Common myeloid progenitor, CD34-positive (primary cell): ENCODE measurements at regions of chr6 and their contacts with region 1.

Region 1: GRCh38 chr6:135922746-135923145 is 71.2 kb downstream of the PDE7B start:
- DNase-seq: no peak
- H3K4me3 ChIP-seq: no peak overlapping the region
- H3K27ac ChIP-seq: no peak overlapping the region
- H3K4me1 ChIP-seq: no peaks in the 10 kb centered on the region
- H3K27me3 ChIP-seq: no peaks in the 10 kb centered on the region

Region 2: DNA sequence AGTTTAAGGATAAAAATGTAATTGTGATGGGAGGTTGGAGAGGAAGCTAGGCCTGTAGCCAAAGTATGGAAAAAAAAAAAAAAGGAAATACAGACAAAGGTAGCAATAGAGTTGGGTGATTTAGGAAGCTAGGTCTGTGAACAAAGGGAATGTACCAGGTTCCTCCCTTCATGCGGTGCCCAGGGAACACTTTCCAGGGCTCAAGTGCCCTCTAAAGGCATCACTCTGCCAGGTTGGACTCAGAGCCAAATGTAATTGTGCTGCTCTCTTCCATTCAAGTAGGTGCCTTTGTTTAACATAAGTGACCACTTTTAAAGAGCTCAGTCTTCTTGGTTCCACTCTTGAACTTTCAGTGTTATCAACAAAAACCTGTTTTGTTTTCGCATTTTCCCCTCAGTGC is 265.5 kb before region 1 on chr6:
- CTCF ChIA-PET with region 1: no interaction called
- POLR2A ChIA-PET with region 1: no interaction called
- DNase-seq: no peak
- H3K4me3 ChIP-seq: no peak overlapping the region
- H3K27ac ChIP-seq: no peak overlapping the region
- H3K4me1 ChIP-seq: peaks cover 0 to 8% (median 8%) of the 10 kb centered on the region in 4 experiments
- H3K27me3 ChIP-seq: no peaks in the 10 kb centered on the region

Region 3: GRCh38 chr6:135811644-135812526 is 110.9 kb before region 1 on chr6:
- CTCF ChIA-PET with region 1: no interaction called
- POLR2A ChIA-PET with region 1: no interaction called
- DNase-seq: peak; percentile 46 to 87 (median 79)
- H3K4me3 ChIP-seq: no peak overlapping the region
- H3K27ac ChIP-seq: peak overlapping the region in 1 of 2 experiments; percentile 27
- H3K4me1 ChIP-seq: peaks cover 0 to 19% (median 12%) of the 10 kb centered on the region in 4 experiments
- H3K27me3 ChIP-seq: no peaks in the 10 kb centered on the region

Region 4: DNA sequence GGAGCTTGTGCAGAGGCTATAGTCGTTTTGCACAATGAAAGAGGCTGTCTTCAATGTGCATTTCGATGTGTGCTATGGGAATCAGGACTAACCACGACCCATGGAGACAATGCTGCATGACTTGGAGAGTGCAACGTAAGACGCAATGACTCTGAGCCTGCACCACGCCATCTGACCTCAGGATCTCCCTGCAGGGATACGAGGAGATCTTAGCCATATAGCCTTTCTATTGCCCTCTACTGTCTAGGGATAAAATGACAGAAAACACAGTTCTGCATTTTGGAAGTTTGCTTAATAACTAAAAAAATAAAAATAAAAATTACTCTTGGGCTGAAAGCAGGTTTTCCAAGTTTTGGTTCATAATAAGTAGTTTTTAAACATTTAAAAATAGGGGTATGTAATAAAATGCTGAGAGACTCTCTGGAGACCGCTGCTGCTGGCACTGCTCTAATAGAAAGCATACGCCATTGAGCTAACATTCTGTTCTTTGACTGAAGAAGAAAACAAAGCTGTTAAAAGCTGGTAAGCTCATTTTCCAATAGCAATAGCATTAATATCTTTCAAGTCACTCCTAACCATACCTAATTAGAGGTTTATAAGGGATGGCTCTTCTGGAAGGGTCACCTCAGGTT is 15.9 kb after region 1 on chr6:
- CTCF ChIA-PET with region 1: interaction called, 11 read pairs
- POLR2A ChIA-PET with region 1: no interaction called
- DNase-seq: peak; percentile 15 to 52 (median 46)
- H3K4me3 ChIP-seq: peak overlapping the region in 1 of 7 experiments; percentile 46
- H3K27ac ChIP-seq: no peak overlapping the region
- H3K4me1 ChIP-seq: peaks cover 0 to 2% (median 0%) of the 10 kb centered on the region in 4 experiments
- H3K27me3 ChIP-seq: no peaks in the 10 kb centered on the region